Activated naive CD4-positive, alpha-beta T cell treated with anti-CD3 and anti-CD28 coated beads for 36 hours (primary cell): ENCODE measurements at regions of chr7 and their contacts with region 1.

Region 1: GRCh38 chr7:85030893-85031292 is 156.0 kb downstream of the SEMA3D start:
- DNase-seq: no peak
- H3K4me3 Mint-ChIP-seq: no peak overlapping the region
- H3K27ac Mint-ChIP-seq: no peak overlapping the region
- H3K4me1 Mint-ChIP-seq: no peaks in the 10 kb centered on the region
- H3K27me3 Mint-ChIP-seq: peaks cover 5% of the 10 kb centered on the region

Region 2: GRCh38 chr7:85554236-85555178 is 523.6 kb after region 1 on chr7:
- CTCF ChIA-PET with region 1: interaction called, 3 read pairs
- intact Hi-C with region 1: loop called (anchors 1 kb)
- DNase-seq: peak; percentile 8
- H3K4me3 Mint-ChIP-seq: no peak overlapping the region
- H3K27ac Mint-ChIP-seq: no peak overlapping the region
- H3K4me1 Mint-ChIP-seq: no peaks in the 10 kb centered on the region
- H3K27me3 Mint-ChIP-seq: no peaks in the 10 kb centered on the region

Region 3: GRCh38 chr7:85750454-85750949 is 719.6 kb after region 1 on chr7:
- CTCF ChIA-PET with region 1: no interaction called
- intact Hi-C with region 1: loop called (anchors 1 kb)
- DNase-seq: peak; percentile 50
- H3K4me3 Mint-ChIP-seq: no peak overlapping the region
- H3K27ac Mint-ChIP-seq: no peak overlapping the region
- H3K4me1 Mint-ChIP-seq: no peaks in the 10 kb centered on the region
- H3K27me3 Mint-ChIP-seq: no peaks in the 10 kb centered on the region

Region 4: GRCh38 chr7:85829817-85830432 is 799.0 kb after region 1 on chr7:
- CTCF ChIA-PET with region 1: no interaction called
- intact Hi-C with region 1: loop called (anchors 5 kb)
- DNase-seq: no peak
- H3K4me3 Mint-ChIP-seq: no peak overlapping the region
- H3K27ac Mint-ChIP-seq: no peak overlapping the region
- H3K4me1 Mint-ChIP-seq: no peaks in the 10 kb centered on the region
- H3K27me3 Mint-ChIP-seq: no peaks in the 10 kb centered on the region

Region 5: DNA sequence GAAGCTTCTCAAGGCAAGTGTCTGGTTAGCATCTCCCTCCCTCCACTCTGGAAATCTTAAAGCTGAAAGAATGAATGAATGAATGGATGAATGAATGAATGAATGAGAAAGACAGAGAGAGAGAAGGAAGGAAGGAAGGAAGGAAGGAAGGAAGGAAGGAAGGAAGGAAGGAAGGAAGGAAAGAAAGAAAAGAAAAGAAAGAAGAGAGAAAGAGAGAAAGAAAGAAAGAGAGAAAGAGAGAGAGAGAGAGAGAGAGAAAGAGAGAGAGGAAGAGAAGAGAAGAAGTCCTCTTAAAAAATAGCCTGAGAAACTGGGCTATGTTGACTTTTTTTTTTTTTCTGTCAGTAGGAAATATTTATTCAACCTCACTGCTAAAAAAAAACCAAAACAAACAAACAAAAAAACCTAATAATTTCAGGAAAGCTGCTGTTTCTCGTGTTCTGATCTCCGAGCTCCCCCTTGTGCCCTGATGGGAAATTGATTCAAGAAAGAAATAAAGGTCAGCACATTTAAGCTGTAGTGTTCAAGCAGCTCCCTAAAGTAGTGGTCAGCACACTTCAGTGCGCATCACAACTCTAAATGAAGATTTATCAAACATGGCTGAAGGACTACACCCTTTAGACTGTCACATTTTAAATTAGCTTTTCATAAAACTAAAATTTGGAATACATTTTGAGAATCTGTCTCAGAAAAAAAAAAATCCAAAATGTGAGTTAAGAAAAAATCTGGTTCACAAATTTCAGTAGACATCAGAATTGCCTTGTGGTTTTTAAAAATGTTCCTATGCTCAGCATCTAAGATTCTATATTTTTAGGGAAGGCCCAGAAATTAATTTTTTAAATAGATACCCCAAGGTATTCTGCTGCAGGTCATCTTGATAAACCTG is 1874.3 kb after region 1 on chr7:
- CTCF ChIA-PET with region 1: no interaction called
- intact Hi-C with region 1: loop called (anchors 5 kb)
- DNase-seq: peak; percentile 23
- H3K4me3 Mint-ChIP-seq: no peak overlapping the region
- H3K27ac Mint-ChIP-seq: no peak overlapping the region
- H3K4me1 Mint-ChIP-seq: no peaks in the 10 kb centered on the region
- H3K27me3 Mint-ChIP-seq: peaks cover 3% of the 10 kb centered on the region